ENCODE measurements at regions of chr5 and their contacts with region 1.

Region 1: DNA sequence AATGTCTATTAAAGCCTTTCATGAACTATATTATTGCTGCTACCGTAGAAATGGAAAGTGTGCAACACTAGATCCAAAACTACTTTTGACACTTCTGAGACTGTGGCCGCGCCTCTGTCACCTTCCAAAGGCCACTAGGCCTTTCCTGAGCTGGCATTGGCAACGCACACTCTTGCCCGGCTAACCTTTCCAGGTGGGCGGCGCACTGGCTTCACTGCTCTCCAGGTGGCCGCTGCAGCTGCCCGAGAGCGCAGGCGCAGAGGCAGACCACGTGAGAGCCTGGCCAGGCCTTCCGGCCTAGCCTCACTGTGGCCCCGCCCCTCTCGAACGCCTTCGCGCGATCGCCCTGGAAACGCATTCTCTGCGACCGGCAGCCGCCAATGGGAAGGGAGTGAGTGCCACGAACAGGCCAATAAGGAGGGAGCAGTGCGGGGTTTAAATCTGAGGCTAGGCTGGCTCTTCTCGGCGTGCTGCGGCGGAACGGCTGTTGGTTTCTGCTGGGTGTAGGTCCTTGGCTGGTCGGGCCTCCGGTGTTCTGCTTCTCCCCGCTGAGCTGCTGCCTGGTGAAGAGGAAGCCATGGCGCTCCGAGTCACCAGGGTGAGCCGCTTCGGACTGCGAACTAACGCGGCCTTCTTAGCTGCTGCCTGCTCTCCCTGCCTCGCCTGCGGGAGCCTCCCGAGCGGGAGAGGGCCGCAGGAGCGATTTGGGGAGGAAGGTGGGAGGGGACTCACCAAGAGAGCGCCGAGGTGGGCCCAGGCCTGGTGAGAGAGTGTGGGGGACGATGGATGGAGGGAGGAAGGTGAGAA is at the start of gene CCNB1:
- DNase-seq: peak; percentile 99
- H3K4me3 ChIP-seq: peak within 1 kb of the TSS; percentile 87 to 97 (median 88)
- H3K27ac ChIP-seq: peak within 1 kb of the TSS; percentile 42
- H3K4me1 ChIP-seq: peaks cover 16% of the 10 kb centered on the region
- H3K27me3 ChIP-seq: no peaks in the 10 kb centered on the region
- CTCF ChIP-seq: no peak
- POLR2A ChIP-seq: peak; percentile 78
- total RNA-seq, gene CCNB1: 187 and 211 TPM in 2 replicates

Region 2: GRCh38 chr5:68924490-68925145 is 242.3 kb before region 1 on chr5:
- CTCF ChIA-PET with region 1: no interaction called
- POLR2A ChIA-PET with region 1: no interaction called
- dilution Hi-C with region 1: no loop called
- intact Hi-C with region 1: no loop called
- DNase-seq: no peak
- H3K4me3 ChIP-seq: no peak overlapping the region
- H3K27ac ChIP-seq: no peak overlapping the region
- H3K4me1 ChIP-seq: no peaks in the 10 kb centered on the region
- H3K27me3 ChIP-seq: no peaks in the 10 kb centered on the region
- CTCF ChIP-seq: no peak
- POLR2A ChIP-seq: no peak

Region 3: DNA sequence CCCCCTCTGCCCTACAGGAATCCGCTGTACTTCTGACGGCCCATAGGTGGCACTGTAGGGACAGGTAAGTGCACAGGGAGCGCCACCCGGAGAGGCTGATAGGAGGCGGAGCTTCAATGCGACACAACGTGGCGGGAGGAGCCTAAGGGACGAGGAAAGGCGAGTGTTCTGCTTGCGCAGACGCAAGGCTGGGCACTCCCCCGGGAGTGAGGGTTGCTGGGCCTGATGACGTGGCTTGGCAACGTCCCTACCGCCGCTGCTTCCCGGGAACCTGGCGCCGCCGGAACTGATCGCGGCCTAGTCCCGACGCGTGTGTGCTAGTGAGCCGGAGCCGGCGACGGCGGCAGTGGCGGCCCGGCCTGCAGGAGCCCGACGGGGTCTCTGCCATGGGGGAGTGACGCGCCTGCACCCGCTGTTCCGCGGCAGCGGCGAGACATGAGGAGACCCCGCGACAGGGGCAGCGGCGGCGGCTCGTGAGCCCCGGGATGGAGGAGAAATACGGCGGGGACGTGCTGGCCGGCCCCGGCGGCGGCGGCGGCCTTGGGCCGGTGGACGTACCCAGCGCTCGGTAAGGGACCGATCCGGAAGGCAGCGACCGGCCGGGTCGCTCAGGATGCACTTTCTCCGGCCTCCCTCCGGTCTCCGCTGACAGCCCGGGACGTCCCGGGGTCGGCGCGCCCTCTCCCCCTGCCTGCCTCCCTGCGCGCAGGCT is 73.0 kb before region 1 on chr5 and contains the start of gene SLC30A5:
- CTCF ChIA-PET with region 1: no interaction called
- POLR2A ChIA-PET with region 1: no interaction called
- dilution Hi-C with region 1: no loop called
- intact Hi-C with region 1: loop called (anchors 1 kb)
- DNase-seq: peak; percentile 100
- H3K4me3 ChIP-seq: peak within 1 kb of the TSS; percentile 84 to 97 (median 85)
- H3K27ac ChIP-seq: peak within 1 kb of the TSS; percentile 87
- H3K4me1 ChIP-seq: peaks cover 9% of the 10 kb centered on the region
- H3K27me3 ChIP-seq: no peaks in the 10 kb centered on the region
- CTCF ChIP-seq: peak; percentile 89 to 93
- POLR2A ChIP-seq: peak; percentile 96
- total RNA-seq, gene SLC30A5: 37.0 and 47.2 TPM in 2 replicates

Region 4: DNA sequence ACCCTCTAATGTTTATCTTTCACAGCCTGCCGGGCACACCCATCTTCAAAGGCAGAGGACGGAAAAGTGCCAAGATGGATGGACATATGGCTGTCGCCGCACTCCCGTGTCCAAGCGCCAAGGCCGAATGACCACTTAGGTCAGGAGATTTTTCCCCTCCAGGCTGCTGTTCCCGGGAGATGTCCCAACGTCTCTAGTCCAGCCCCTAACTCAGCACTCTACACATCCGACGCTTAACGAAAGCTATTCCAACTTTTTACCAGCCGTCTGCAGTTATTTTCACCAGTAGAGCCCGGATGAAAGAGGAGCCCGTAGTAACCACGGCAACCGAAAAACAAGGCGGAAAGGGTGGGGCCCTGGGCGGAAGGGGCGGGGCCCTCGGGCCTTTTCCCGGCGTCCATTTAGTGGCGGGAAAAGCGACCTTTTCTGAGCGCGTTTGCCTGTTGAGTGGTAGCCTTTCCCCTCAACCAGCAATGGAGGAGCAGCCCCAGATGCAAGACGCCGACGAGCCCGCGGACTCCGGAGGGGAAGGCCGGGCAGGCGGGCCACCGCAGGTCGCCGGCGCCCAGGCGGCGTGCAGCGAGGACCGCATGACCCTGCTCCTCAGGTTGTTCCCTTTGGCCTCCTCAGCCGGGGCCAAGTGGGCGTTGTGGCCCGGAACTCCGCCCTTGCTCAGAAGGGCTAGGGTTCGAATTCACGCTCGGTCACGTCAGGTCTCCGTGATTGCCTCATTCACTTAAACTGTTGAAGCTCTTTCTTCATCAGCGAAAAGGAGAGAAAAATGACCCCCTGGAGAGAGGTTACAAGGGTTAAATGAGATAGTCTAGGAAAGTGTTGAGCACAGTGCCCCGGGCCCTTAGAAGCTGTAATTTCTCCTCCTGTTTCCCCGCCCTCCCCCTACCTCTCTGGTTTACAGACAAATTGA is 22.5 kb after region 1 on chr5 and contains the start of gene CENPH:
- CTCF ChIA-PET with region 1: interaction called, 3 read pairs
- POLR2A ChIA-PET with region 1: no interaction called
- dilution Hi-C with region 1: no loop called
- intact Hi-C with region 1: loop called (anchors 1 kb)
- DNase-seq: peak; percentile 92
- H3K4me3 ChIP-seq: peak within 1 kb of the TSS; percentile 56 to 91 (median 80)
- H3K27ac ChIP-seq: peak within 1 kb of the TSS; percentile 73
- H3K4me1 ChIP-seq: peaks cover 12% of the 10 kb centered on the region
- H3K27me3 ChIP-seq: no peaks in the 10 kb centered on the region
- CTCF ChIP-seq: no peak
- POLR2A ChIP-seq: peak; percentile 78
- total RNA-seq, gene CENPH: 16.4 and 17.1 TPM in 2 replicates

Region 5: DNA sequence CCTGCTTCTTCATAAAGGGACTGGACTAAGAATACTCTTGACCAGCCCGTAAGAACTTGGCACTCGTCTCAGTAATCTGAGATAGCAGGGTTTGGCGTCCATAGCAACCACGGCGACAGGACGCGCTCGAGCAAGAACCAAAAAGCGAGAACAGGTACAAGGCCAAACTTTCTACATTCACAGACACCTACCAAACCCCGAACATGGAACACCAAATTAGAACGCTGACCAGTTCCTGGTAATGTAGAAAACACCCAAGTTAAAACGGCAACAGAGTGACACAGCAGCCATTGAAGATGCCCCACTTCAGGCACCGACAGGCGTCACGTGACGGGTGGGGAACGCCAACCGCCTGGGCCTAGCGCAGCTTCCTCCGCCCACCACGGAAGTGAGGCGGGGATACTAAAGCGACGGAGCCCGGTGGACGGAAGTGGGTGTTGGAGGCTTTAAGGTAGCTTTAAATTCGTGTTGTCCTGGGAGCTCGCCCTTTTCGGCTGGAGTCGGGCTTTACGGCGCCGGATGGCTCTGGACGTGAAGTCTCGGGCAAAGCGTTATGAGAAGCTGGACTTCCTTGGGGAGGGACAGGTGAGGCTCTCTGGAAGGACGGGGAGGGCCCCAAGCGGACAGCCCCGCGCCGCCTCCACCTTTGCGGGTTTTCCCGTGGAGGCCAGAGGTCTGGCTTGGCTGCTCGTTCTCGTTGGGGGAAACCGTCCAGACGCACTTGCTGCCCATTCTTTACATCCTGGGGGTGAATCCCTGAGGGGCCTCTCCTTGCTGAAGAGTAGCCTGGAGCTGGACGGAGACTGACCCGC is 67.8 kb after region 1 on chr5 and contains the start of gene CDK7:
- CTCF ChIA-PET with region 1: no interaction called
- POLR2A ChIA-PET with region 1: no interaction called
- dilution Hi-C with region 1: no loop called
- intact Hi-C with region 1: loop called (anchors 1 kb)
- DNase-seq: peak; percentile 95
- H3K4me3 ChIP-seq: peak within 1 kb of the TSS; percentile 50 to 98 (median 79)
- H3K27ac ChIP-seq: peak within 1 kb of the TSS; percentile 57
- H3K4me1 ChIP-seq: peaks cover 33% of the 10 kb centered on the region
- H3K27me3 ChIP-seq: no peaks in the 10 kb centered on the region
- CTCF ChIP-seq: no peak
- POLR2A ChIP-seq: peak; percentile 95
- total RNA-seq, gene CDK7: 33.4 and 38.1 TPM in 2 replicates

Region 6: GRCh38 chr5:69369369-69370121 is 202.7 kb after region 1 on chr5 and contains the starts of genes AK6, RAD17 and TAF9:
- CTCF ChIA-PET with region 1: no interaction called
- POLR2A ChIA-PET with region 1: no interaction called
- dilution Hi-C with region 1: no loop called
- intact Hi-C with region 1: loop called (anchors 2 kb)
- DNase-seq: peak; percentile 95
- H3K4me3 ChIP-seq: peak within 1 kb of the TSS; percentile 82 to 100 (median 98)
- H3K27ac ChIP-seq: peak within 1 kb of the TSS; percentile 97
- H3K4me1 ChIP-seq: peaks cover 15% of the 10 kb centered on the region
- H3K27me3 ChIP-seq: no peaks in the 10 kb centered on the region
- CTCF ChIP-seq: no peak
- POLR2A ChIP-seq: peak; percentile 95
- total RNA-seq, gene AK6: 30.1 and 37.0 TPM in 2 replicates
- total RNA-seq, gene RAD17: 18.4 and 21.9 TPM in 2 replicates
- total RNA-seq, gene TAF9: 67.6 and 67.8 TPM in 2 replicates

Region 7: GRCh38 chr5:69414885-69415583 is 248.1 kb after region 1 on chr5 and contains the start of gene MARVELD2:
- CTCF ChIA-PET with region 1: no interaction called
- POLR2A ChIA-PET with region 1: no interaction called
- dilution Hi-C with region 1: no loop called
- intact Hi-C with region 1: loop called (anchors 10 kb)
- DNase-seq: peak; percentile 63
- H3K4me3 ChIP-seq: peak within 1 kb of the TSS; percentile 43 to 74 (median 64)
- H3K27ac ChIP-seq: no peak within 1 kb of the TSS
- H3K4me1 ChIP-seq: peaks cover 5% of the 10 kb centered on the region
- H3K27me3 ChIP-seq: no peaks in the 10 kb centered on the region
- CTCF ChIP-seq: peak; percentile 26 to 67
- POLR2A ChIP-seq: no peak
- total RNA-seq, gene MARVELD2: 6.7 and 7.1 TPM in 2 replicates